Activated CD8-positive, alpha-beta memory T cell treated with anti-CD3 and anti-CD28 coated beads, Interleukin-2, amount 10 ng/mL, durations not matched to agents 7 days and 5 days (primary cell): ENCODE measurements at regions of chr12 and their contacts with region 1.

Region 1: DNA sequence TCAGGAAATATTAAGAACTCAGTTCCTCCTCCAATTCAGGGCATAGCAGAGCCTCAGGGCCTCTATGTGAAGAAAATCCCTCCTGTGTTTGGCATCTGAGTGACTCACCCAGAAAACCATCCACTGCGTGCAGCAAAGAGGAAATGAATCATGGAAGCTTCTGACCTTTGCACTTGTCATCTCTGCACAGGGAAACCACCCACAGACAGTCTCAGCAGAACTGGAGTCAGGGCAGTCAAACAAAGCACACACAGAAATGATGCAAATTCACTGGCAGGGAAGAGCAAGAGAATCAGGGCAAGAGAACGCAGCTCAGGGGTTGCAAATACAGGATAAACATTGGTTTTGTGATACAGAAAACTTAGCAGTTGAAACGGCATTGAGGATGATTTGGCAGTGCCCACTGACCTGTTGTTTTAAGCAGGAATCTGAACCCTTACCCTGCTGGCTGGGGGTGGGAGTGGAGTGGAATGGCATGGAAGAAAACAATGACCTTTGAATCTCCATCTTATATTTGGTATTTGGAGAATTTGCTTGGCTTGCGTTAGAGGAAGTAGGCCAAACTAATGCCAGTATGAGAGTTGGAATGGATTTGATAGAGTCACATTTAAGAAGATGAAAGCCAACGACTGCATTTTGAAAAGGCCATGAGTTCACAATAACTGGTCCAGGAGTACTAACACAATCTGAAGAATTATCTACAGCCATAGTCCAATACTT is 53.5 kb downstream of the PHLDA1 start:
- DNase-seq: peak; percentile 93
- ATAC-seq: peak; percentile 91
- H3K4me3 Mint-ChIP-seq: peak overlapping the region; percentile 9
- H3K27ac Mint-ChIP-seq: peak overlapping the region; percentile 94
- H3K4me1 Mint-ChIP-seq: peaks cover 65% of the 10 kb centered on the region
- H3K27me3 Mint-ChIP-seq: no peaks in the 10 kb centered on the region

Region 2: GRCh38 chr12:75996861-75997447 is 18.8 kb after region 1 on chr12:
- CTCF ChIA-PET with region 1: interaction called, 17 read pairs
- DNase-seq: no peak
- ATAC-seq: peak; percentile 35
- H3K4me3 Mint-ChIP-seq: no peak overlapping the region
- H3K27ac Mint-ChIP-seq: peak overlapping the region; percentile 39
- H3K4me1 Mint-ChIP-seq: peaks cover 48% of the 10 kb centered on the region
- H3K27me3 Mint-ChIP-seq: no peaks in the 10 kb centered on the region

Region 3: DNA sequence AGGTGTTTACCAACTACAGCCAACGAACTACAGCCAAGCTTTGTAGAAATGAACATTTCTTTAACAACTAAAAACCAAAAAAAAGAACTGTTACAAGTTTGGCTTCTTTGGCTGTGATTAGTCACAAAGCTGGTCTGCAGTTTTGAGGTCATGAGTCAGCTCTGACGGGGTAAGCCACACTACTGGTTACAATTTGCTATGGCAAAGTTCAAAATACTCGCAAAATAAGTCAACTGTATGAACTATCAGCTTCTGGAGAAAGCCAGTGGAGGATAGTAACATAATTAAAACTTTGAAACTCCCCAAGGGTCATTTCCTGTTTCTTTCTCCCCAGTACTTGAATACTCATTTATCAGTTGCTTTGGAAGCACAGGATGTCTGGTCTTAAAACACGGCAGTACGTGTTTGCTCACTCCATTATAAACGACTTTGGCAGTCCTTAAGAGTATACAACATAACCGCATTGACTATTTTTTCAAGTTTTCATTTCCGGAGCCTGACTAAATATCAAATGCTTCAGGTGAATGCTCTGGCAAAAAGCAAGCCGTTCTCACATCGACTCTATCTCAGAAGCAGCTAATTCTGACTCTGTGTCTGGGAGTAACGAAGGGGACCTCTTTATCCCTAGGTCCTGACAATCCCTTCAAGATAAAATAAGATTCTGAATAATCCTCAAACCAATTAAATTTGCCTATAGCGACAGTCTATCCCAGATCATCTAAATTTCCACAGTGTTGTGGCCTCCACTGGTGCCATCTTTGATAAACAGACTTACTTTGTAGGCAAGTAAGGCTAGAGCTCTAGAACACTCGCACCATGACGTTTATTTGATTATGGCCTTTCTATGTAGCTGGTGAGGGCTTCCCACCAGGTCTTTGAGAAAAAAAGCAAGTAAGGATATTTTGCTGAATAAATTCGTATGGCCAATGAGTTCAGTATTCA is 42.9 kb after region 1 on chr12:
- CTCF ChIA-PET with region 1: interaction called, 18 read pairs
- DNase-seq: peak; percentile 92
- ATAC-seq: peak; percentile 77
- H3K4me3 Mint-ChIP-seq: peak overlapping the region; percentile 66
- H3K27ac Mint-ChIP-seq: peak overlapping the region; percentile 100
- H3K4me1 Mint-ChIP-seq: peaks cover 71% of the 10 kb centered on the region
- H3K27me3 Mint-ChIP-seq: no peaks in the 10 kb centered on the region